ENCODE measurements at regions of chr22 and their contacts with region 1.

Region 1: DNA sequence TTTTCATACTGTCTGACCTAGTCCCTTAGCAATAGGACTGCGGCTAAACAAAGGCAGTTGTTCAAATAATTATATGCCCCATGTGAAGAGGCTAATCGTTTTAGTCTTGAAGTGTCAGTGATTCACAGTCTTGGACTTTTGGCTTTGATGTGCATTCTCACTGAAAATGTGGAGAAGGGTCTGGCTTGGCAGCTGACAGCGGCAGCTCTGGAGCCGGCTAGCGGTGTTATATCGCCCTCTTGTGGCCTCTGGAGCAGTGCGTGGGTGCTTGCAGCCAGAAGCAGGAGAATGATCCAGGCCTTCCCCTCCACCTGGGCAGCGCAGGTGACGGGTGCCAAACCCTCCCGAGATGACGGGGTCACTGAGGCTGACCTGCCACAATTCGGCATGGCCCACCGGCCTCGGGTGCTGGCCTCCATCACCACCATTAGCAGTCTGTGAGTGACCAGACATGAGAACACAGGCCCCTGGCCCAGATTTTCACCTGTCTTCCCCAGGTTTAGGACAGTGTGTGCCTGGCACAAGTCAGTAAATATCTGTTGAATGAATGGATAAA is 90.3 kb upstream of the PITPNB start:
- DNase-seq: peak; percentile 80
- ATAC-seq: peak; percentile 74

Region 2: DNA sequence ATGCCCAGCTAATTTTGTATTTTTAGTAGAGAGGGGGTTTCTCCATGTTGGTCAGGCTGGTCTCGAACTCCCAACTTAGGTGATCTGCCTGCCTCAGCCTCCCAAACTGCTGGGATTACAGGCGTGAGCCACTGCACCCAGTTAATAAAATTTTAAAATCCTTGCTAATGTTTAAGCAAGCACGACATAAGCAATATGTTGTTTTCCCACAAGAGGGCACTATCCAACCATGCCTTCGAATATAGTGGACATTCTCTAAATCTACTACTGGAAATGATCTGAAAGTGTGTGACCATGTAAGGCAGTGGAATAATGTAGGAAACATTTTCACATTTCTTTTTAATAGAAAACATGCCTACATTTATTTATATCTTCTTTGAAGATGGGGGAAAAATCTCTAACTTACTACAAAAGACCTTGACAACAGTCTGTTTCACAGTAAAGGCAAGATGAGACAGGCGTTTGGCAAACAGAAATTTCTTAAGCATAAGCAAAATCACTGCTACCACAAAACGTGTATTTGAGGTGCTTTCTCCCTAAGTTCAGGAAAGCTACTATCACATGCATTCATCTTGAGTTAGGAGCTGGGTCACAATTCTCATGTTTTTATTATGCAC is 128.5 kb before region 1 on chr22:
- intact Hi-C with region 1: loop called (anchors 2 kb)
- DNase-seq: no peak
- ATAC-seq: peak; percentile 84

Region 3: GRCh38 chr22:27885977-27886842 is 123.1 kb before region 1 on chr22:
- intact Hi-C with region 1: loop called (anchors 2 kb)
- DNase-seq: no peak
- ATAC-seq: peak; percentile 55

Region 4: GRCh38 chr22:28075358-28075981 is 66.1 kb after region 1 on chr22:
- intact Hi-C with region 1: no loop called
- DNase-seq: no peak
- ATAC-seq: peak; percentile 72